ENCODE measurements at regions of chr12 and their contacts with region 1.

Region 1: DNA sequence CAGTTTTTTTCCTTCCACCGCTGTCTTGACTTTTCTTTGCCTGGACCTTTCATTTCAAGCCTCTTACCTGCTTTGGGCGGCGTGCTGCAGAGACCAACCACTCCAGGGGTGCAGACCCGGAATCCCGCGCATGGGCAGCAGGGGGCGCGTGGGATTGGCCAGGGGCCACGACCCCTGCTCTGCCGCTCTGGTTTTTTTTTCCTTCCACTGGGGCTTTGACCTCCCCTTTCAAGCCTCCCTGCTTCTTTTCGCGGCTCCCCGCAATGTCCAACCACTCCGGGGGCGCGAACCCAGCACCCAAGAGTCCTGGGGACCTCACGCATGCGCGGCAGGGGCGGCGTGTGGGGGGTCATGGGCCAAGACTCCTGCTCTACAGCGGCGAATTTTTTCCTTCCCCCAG is 325.1 kb downstream of the ALG10 start:
- DNase-seq: no peak
- ATAC-seq: no peak
- H3K4me3 ChIP-seq: no peak overlapping the region
- H3K27ac ChIP-seq: no peak overlapping the region
- H3K4me1 ChIP-seq: no peaks in the 10 kb centered on the region
- H3K27me3 ChIP-seq: peaks cover 0 to 6% (median 0%) of the 10 kb centered on the region in 3 donors
- CTCF ChIP-seq: no peak

Region 2: GRCh38 chr12:34389378-34390170 is 42.2 kb after region 1 on chr12:
- intact Hi-C with region 1: loop called in 1 of 2 experiments (anchors 2 kb)
- DNase-seq: peak in 1 of 2 donors; percentile 24
- ATAC-seq: no peak
- H3K4me3 ChIP-seq: no peak overlapping the region
- H3K27ac ChIP-seq: no peak overlapping the region
- H3K4me1 ChIP-seq: no peaks in the 10 kb centered on the region
- H3K27me3 ChIP-seq: no peaks in the 10 kb centered on the region
- CTCF ChIP-seq: no peak

Measured in psoas muscle (tissue), 8 donors.